Vagina (tissue), 2 donors: ENCODE measurements at regions of chr2 and their contacts with region 1.

Region 1: GRCh38 chr2:38605298-38605830 is 2.6 kb upstream of the HNRNPLL start:
- DNase-seq: no peak
- H3K4me3 ChIP-seq: no peak overlapping the region
- H3K27ac ChIP-seq: no peak overlapping the region
- H3K4me1 ChIP-seq: peaks cover 12% of the 10 kb centered on the region
- H3K27me3 ChIP-seq: no peaks in the 10 kb centered on the region
- CTCF ChIP-seq: no peak
- POLR2A ChIP-seq: no peak

Region 2: DNA sequence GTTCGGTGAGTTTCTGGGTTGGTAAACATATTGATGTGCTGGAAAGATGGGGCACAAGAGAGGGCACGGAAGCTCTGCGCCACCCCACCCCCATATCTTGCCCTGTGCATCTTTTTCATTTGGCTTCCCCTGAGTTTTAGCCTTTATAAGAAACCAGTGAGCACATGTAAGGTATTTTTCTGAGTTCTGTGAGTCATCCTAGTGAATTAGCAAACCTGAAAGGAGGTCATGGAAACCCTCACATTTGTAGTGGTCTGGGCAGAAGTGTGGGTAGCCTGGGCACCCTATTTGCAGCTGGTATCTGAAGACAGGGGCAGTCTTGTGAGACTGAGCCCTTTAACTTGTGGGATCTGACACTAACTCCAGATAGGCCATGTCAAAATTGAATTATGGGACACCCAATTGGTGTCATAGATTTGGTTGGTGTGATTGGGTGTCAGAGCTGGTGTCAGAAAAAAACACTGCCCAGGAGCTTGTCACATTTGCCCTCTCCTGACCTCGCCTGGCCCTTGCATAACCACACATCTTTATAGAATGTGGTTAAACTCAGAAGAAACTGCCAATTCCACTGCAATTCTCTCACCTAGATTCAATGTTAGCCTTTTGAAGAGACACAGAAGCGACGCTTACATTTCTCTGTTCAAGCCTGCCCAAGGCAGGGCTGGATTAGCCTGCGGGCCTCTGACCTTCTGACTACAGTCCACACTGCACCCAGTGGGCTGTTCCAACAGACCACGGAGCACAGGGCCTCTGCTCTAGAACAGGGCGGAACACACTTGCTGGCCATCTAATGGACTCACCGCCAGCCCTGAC is 48.6 kb after region 1 on chr2:
- intact Hi-C with region 1: no loop called
- DNase-seq: peak in 1 of 2 donors; percentile 20
- H3K4me3 ChIP-seq: no peak overlapping the region
- H3K27ac ChIP-seq: no peak overlapping the region
- H3K4me1 ChIP-seq: no peaks in the 10 kb centered on the region
- H3K27me3 ChIP-seq: no peaks in the 10 kb centered on the region
- CTCF ChIP-seq: no peak
- POLR2A ChIP-seq: no peak

Region 3: GRCh38 chr2:38734299-38735058 is 129.1 kb after region 1 on chr2:
- intact Hi-C with region 1: loop called (anchors 5 kb)
- DNase-seq: no peak
- H3K4me3 ChIP-seq: no peak overlapping the region
- H3K27ac ChIP-seq: no peak overlapping the region
- H3K4me1 ChIP-seq: no peaks in the 10 kb centered on the region
- H3K27me3 ChIP-seq: no peaks in the 10 kb centered on the region
- CTCF ChIP-seq: no peak
- POLR2A ChIP-seq: no peak

Region 4: GRCh38 chr2:38754506-38754905 is 149.1 kb after region 1 on chr2:
- intact Hi-C with region 1: no loop called
- DNase-seq: no peak
- H3K4me3 ChIP-seq: peak overlapping the region in 1 of 2 donors; percentile 10
- H3K27ac ChIP-seq: no peak overlapping the region
- H3K4me1 ChIP-seq: peaks cover 13% of the 10 kb centered on the region
- H3K27me3 ChIP-seq: no peaks in the 10 kb centered on the region
- CTCF ChIP-seq: no peak
- POLR2A ChIP-seq: no peak

Region 5: DNA sequence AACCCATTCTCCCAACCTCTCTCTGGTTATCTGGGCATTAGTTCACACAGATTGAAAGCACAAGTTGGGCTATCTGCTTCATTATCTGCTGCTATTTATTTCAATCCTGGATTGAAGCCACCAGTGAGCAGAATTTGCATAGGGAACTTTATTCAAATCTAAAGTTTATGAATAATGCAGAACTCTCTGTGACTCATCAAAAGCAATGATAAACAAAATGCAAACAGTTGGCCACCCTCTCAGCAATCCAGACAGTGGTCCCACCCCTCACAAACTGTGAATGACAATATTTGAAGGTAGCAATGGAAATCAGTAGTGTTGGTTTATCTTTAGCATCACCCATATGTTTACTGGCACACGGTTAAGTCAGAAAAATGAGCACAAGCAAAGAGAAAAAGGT is 953.5 kb after region 1 on chr2:
- intact Hi-C with region 1: no loop called
- DNase-seq: no peak
- H3K4me3 ChIP-seq: no peak overlapping the region
- H3K27ac ChIP-seq: no peak overlapping the region
- H3K4me1 ChIP-seq: no peaks in the 10 kb centered on the region
- H3K27me3 ChIP-seq: no peaks in the 10 kb centered on the region
- CTCF ChIP-seq: no peak
- POLR2A ChIP-seq: no peak